H1 (cell line): ENCODE measurements at regions of chr4 and their contacts with region 1.

Region 1: GRCh38 chr4:164949448-164950143 is 27.9 kb downstream of the TRIM61 start:
- DNase-seq: peak in 1 of 2 experiments; percentile 80
- H3K4me3 ChIP-seq: no peak overlapping the region
- H3K27ac ChIP-seq: no peak overlapping the region; the same call in 1 of the 2 replicates
- H3K4me1 ChIP-seq: no peaks in the 10 kb centered on the region
- H3K27me3 ChIP-seq: no peaks in the 10 kb centered on the region
- CTCF ChIP-seq: peak; percentile 59 to 76 (median 62)
- EP300 ChIP-seq: no peak
- POLR2A ChIP-seq: no peak
- RAD21 ChIP-seq: peak; percentile 57 to 66

Region 2: GRCh38 chr4:164819366-164819765 is 130.2 kb before region 1 on chr4:
- CTCF ChIA-PET with region 1: interaction called, 10 read pairs
- POLR2A ChIA-PET with region 1: no interaction called
- DNase-seq: no peak
- H3K4me3 ChIP-seq: no peak overlapping the region
- H3K27ac ChIP-seq: no peak overlapping the region
- H3K4me1 ChIP-seq: peaks cover 0 to 15% (median 3%) of the 10 kb centered on the region in 4 experiments; a peak in 4 of 7 replicates
- H3K27me3 ChIP-seq: no peaks in the 10 kb centered on the region
- CTCF ChIP-seq: no peak
- EP300 ChIP-seq: no peak
- POLR2A ChIP-seq: no peak
- RAD21 ChIP-seq: no peak

Region 3: GRCh38 chr4:165070560-165070959 is 121.0 kb after region 1 on chr4:
- CTCF ChIA-PET with region 1: no interaction called
- POLR2A ChIA-PET with region 1: no interaction called
- DNase-seq: no peak
- H3K4me3 ChIP-seq: no peak overlapping the region
- H3K27ac ChIP-seq: no peak overlapping the region
- H3K4me1 ChIP-seq: no peaks in the 10 kb centered on the region
- H3K27me3 ChIP-seq: no peaks in the 10 kb centered on the region
- CTCF ChIP-seq: no peak
- EP300 ChIP-seq: no peak
- POLR2A ChIP-seq: no peak
- RAD21 ChIP-seq: no peak